ENCODE measurements at regions of chr3 and their contacts with region 1.

Region 1: GRCh38 chr3:136752422-136753325 is 496 bp upstream of the STAG1 start:
- H3K4me3 ChIP-seq: peak overlapping the region; percentile 71
- H3K27ac ChIP-seq: peak overlapping the region; percentile 97
- H3K4me1 ChIP-seq: peaks cover 11% of the 10 kb centered on the region; the same call in 1 of the 2 replicates
- CTCF ChIP-seq: no peak

Region 2: GRCh38 chr3:136075218-136075808 is 677.4 kb before region 1 on chr3:
- CTCF ChIA-PET with region 1: interaction called, 21 read pairs
- POLR2A ChIA-PET with region 1: interaction called, 4 read pairs
- H3K4me3 ChIP-seq: no peak overlapping the region
- H3K27ac ChIP-seq: no peak overlapping the region
- H3K4me1 ChIP-seq: 0 out of 2 replicates have a peak, but pooled peaks cover 5% of the 10 kb centered on the region
- CTCF ChIP-seq: peak; percentile 59

Region 3: DNA sequence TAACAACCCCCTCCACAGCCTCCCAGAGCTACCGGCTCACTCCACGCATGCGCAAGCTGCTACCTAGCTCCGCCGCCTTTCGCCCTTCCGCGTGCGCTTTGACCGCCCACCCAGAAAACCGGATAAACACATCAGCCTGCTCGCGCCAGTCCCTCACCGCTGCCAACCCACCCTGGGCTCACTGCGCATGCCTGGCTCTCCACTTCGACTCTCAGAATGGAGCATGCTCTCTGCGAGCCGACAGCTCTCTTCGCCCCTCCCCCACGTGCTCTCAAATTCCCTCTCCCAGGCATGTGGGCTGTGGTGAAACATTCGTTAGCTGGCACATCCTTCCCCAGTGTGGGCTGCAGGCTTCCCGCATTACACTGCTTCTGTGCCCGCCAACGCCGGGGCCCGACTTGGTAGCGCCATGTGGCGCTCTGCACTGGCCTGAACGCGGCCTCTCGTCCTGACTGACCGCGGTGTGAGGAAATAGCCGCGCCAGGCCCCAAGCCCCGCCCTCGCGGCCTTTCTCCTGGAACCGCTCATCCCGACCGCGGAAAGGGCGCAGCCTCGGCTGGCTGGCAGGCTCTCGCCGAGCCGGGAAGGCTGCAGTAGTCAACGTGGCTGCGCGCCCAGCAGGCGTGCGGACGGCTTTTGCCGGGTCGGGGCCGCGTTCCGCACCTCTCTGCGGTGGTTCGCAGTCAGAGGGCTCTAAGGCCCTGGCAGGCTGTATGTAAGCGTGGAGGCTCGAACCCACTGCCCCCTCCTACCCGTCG is 556.1 kb before region 1 on chr3:
- CTCF ChIA-PET with region 1: no interaction called
- POLR2A ChIA-PET with region 1: interaction called, 24 read pairs
- H3K4me3 ChIP-seq: peak overlapping the region; percentile 83
- H3K27ac ChIP-seq: peak overlapping the region; percentile 99
- H3K4me1 ChIP-seq: no peaks in the 10 kb centered on the region; the same call in 1 of the 2 replicates
- CTCF ChIP-seq: peak; percentile 60

Region 4: DNA sequence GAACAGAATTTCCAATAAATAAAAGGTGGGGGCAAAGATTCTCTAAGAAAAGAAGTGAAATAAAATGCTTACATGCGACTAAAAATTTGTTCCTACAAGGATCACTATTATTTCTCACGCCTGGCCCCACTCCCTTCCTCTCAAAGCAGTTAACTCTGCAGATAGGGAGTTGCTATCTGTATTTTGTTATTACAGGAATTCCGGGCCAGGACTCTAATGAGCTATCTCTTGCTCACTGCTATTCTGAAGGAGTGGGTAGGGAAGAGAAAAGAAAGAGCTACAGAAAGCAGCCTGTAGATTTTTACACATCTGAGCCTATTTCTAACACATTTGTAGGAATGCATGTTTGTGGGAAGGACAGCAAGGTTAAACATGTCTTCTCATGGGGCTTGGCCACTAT is 362.1 kb before region 1 on chr3:
- CTCF ChIA-PET with region 1: interaction called, 20 read pairs
- POLR2A ChIA-PET with region 1: interaction called, 5 read pairs
- H3K4me3 ChIP-seq: no peak overlapping the region
- H3K27ac ChIP-seq: no peak overlapping the region
- H3K4me1 ChIP-seq: no peaks in the 10 kb centered on the region
- CTCF ChIP-seq: no peak

Region 5: GRCh38 chr3:136396916-136397315 is 355.8 kb before region 1 on chr3:
- CTCF ChIA-PET with region 1: interaction called, 20 read pairs
- POLR2A ChIA-PET with region 1: interaction called, 5 read pairs
- H3K4me3 ChIP-seq: no peak overlapping the region
- H3K27ac ChIP-seq: no peak overlapping the region
- H3K4me1 ChIP-seq: no peaks in the 10 kb centered on the region
- CTCF ChIP-seq: no peak

Region 6: DNA sequence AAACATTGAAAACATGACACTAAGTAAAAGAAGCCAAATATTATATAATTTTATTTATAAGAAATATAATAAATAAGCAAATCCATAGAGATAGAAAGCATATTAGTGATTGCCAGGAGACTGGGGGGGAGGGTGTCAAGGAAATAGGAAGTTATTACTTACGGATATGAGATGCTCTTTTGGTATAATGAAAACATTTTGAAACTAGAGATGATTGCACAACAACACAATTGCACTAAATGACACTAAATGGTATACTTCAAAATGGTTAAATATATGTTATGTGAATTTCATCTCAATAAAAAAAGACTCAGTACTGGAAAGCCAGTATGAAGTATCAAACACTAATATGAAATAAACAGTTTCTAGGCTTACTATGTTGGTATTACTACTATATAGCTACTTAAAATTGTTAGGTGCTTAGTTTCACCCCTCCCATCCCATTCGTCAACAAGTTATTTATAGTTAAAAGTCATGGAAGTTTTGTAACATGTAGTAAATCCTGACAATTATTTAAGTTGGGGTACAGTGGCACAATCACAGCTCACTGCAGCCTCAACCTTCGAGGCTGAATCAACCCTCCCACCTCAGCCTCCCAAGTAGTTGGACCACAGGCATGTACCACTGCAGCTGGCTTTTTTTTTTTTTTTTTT is 44.2 kb before region 1 on chr3:
- CTCF ChIA-PET with region 1: no interaction called
- POLR2A ChIA-PET with region 1: no interaction called
- H3K4me3 ChIP-seq: no peak overlapping the region
- H3K27ac ChIP-seq: no peak overlapping the region
- H3K4me1 ChIP-seq: no peaks in the 10 kb centered on the region
- CTCF ChIP-seq: no peak

Region 7: GRCh38 chr3:136861890-136862616 is 109.4 kb after region 1 on chr3 and contains the start of gene NCK1:
- CTCF ChIA-PET with region 1: no interaction called
- POLR2A ChIA-PET with region 1: interaction called, 41 read pairs
- H3K4me3 ChIP-seq: peak within 1 kb of the TSS; percentile 91
- H3K27ac ChIP-seq: peak within 1 kb of the TSS; percentile 76
- H3K4me1 ChIP-seq: no peaks in the 10 kb centered on the region; the same call in 1 of the 2 replicates
- CTCF ChIP-seq: peak; percentile 88

Region 8: DNA sequence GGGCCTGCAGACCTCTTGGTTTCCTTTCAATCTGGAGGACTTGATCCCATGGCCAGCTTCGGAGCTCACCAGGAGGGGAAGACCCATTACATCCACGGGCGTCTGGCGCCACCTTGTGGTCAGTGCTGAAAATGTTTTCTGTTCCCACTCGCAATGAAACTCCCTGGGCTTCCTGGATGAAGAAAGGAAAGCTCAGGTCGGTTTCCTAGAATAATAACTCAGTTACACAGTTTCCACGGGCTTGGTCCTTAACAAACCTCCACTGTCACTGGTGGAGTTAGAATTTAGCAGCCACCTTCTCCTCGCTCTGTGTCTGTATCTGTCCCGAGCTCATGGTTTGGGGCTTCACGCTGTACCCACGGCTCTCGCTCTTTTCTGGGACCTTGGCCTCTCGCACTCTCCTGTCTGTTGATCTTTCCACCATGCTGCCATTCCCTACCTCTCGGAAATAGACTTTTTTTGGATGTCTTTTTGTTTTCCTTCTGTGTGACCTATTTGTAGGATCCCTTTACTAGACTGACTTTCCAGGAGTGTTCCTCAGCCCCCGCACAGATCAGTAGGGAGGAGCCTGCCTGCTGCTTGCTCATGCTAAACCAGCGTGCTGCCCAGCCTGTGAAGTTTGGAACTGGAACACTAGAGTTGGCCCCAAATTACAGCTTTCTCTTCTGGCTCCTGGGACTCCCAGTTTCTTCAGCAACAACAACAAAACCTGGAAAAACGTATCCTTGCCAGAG is 261.4 kb after region 1 on chr3:
- CTCF ChIA-PET with region 1: interaction called, 14 read pairs
- POLR2A ChIA-PET with region 1: interaction called, 13 read pairs
- H3K4me3 ChIP-seq: peak overlapping the region; percentile 1
- H3K27ac ChIP-seq: no peak overlapping the region
- H3K4me1 ChIP-seq: no peaks in the 10 kb centered on the region
- CTCF ChIP-seq: peak; percentile 71

Measured in HEK293 (cell line).